ENCODE measurements at regions of chr6 and their contacts with region 1.

Region 1: DNA sequence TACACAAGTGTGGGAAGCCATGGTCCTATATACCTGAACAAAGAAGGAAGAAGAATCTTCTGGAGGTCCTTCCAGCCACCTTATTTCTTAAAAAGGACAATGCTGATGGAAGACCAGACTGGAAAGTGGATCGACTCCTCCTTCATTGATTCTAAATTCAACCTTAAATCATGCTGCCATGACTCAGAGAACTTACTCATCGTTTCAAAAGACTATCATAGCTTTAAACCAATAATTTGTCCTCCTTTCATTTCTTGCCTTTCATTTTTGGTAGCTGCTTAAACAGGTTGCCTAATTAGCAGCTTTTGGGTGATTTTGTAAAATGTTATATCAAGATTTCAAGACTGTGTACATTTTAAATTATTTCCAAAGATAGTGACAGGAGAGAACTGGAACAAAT is 60.8 kb downstream of the RTN4IP1 start:
- DNase-seq: no peak
- H3K4me3 ChIP-seq: no peak overlapping the region
- H3K27ac ChIP-seq: no peak overlapping the region
- H3K4me1 ChIP-seq: peaks cover 6% of the 10 kb centered on the region
- H3K27me3 ChIP-seq: no peaks in the 10 kb centered on the region
- CTCF ChIP-seq: no peak
- POLR2A ChIP-seq: no peak

Region 2: GRCh38 chr6:106339334-106340029 is 229.0 kb before region 1 on chr6:
- intact Hi-C with region 1: loop called (anchors 5 kb)
- DNase-seq: peak; percentile 57
- H3K4me3 ChIP-seq: no peak overlapping the region
- H3K27ac ChIP-seq: no peak overlapping the region
- H3K4me1 ChIP-seq: no peaks in the 10 kb centered on the region
- H3K27me3 ChIP-seq: no peaks in the 10 kb centered on the region
- CTCF ChIP-seq: peak in 3 of 4 experiments; percentile 64 to 67 (median 67)
- POLR2A ChIP-seq: no peak

Region 3: GRCh38 chr6:106444777-106445507 is 123.6 kb before region 1 on chr6:
- intact Hi-C with region 1: loop called (anchors 5 kb)
- DNase-seq: peak; percentile 47
- H3K4me3 ChIP-seq: no peak overlapping the region
- H3K27ac ChIP-seq: peak overlapping the region in 1 of 2 donors; percentile 78
- H3K4me1 ChIP-seq: peaks cover 15% of the 10 kb centered on the region
- H3K27me3 ChIP-seq: no peaks in the 10 kb centered on the region
- CTCF ChIP-seq: peak; percentile 76 to 86 (median 80)
- POLR2A ChIP-seq: no peak

Region 4: DNA sequence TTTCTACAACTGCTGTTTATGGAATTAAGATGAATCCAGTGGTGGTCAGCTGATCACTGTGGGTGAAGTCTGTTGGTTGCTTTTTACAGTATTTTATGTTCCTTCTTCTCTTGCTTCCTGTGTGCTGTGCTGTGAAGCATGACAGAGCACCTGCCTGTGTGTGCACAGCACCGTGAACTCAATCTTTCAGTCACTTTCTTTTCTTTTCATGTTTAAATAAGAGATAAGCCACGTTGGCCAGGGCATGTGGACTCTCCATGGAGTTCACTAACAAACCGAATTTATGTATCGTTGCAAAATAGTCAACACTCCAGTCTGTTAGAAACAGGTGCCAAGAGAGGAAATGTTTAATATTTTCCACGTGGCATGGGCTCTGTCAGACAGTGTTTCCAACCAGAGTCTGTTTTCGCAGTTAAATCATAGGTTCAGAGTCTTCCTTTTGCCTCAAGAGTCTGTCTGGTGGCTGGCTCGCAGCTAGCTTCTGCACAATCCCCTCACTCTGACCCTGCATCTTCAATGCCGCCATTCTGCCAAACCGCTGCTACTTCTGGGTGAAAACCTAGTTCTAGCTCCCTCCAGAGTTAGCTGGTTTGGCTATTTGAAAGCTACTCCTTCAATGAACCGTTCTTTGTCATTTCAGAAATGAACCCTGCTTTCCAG is 134.1 kb after region 1 on chr6:
- intact Hi-C with region 1: no loop called
- DNase-seq: peak; percentile 8
- H3K4me3 ChIP-seq: no peak overlapping the region
- H3K27ac ChIP-seq: no peak overlapping the region
- H3K4me1 ChIP-seq: no peaks in the 10 kb centered on the region
- H3K27me3 ChIP-seq: no peaks in the 10 kb centered on the region
- CTCF ChIP-seq: no peak
- POLR2A ChIP-seq: no peak

Region 5: GRCh38 chr6:106783631-106784566 is 215.4 kb after region 1 on chr6:
- intact Hi-C with region 1: no loop called
- DNase-seq: no peak
- H3K4me3 ChIP-seq: no peak overlapping the region
- H3K27ac ChIP-seq: no peak overlapping the region
- H3K4me1 ChIP-seq: no peaks in the 10 kb centered on the region
- H3K27me3 ChIP-seq: no peaks in the 10 kb centered on the region
- CTCF ChIP-seq: no peak
- POLR2A ChIP-seq: no peak